Left colon (tissue), 2 donors: ENCODE measurements at regions of chr4 and their contacts with region 1.

Region 1: DNA sequence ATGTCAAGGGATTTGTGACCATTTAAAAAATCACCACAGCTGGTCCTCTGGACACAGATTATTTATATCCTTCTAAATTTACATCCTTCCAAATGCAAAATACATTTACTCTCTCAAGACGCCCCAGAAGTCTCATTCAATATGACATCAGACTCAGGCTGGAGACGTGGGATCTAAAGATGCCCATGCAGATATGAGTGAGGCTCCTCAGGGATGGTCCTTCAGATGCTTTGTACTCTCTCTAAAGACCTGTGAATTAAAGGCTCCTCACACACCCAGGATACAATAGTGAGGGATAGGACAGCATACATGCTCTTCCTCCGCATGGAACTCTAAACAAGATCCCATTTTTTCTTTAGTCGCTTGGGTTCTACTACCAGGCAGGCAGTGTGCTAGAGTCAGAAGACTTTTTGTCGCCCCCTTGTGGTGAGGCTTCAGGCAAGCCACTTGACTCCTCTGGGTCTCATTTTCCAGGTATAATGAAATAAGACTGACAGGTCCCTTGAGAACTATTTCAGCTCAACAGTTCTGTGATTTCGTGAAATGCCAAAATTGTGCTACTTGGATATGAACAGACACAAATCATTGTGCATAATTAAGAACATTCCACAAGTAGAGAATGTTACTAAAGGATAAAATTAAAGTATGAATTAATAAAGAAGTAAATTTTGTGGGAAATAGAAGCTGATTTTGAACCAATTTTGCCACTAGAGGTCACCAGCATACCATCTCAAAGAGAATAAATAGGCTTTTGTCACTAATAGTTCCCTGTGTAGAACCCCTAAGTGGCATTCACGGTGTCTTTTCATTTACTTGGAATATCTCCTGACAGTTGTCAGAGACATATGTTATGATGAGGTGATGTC is 13.7 kb upstream of the SCOC start:
- DNase-seq: peak; percentile 65 to 88
- ATAC-seq: peak; percentile 67

Region 2: DNA sequence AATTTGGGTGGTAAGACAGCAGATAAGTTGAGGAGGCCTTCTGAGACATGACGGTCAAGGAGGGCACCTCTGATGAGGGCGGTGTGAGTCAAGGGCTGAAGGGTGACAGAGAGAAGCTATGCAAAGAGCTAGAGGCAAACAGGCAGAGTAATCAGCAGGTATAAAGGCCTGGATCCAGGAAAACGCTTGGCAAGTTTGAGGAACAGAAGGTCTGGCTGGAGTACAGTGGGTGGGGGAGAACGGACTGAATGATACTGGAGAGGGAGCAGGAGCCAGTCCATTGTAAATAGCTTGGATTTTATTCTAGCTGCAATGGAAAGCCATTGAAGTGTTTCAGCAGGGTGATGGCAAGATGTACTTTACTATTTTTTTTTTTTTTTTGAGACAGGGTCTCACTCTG is 866.6 kb before region 1 on chr4:
- intact Hi-C with region 1: no loop called
- DNase-seq: no peak
- ATAC-seq: no peak

Region 3: DNA sequence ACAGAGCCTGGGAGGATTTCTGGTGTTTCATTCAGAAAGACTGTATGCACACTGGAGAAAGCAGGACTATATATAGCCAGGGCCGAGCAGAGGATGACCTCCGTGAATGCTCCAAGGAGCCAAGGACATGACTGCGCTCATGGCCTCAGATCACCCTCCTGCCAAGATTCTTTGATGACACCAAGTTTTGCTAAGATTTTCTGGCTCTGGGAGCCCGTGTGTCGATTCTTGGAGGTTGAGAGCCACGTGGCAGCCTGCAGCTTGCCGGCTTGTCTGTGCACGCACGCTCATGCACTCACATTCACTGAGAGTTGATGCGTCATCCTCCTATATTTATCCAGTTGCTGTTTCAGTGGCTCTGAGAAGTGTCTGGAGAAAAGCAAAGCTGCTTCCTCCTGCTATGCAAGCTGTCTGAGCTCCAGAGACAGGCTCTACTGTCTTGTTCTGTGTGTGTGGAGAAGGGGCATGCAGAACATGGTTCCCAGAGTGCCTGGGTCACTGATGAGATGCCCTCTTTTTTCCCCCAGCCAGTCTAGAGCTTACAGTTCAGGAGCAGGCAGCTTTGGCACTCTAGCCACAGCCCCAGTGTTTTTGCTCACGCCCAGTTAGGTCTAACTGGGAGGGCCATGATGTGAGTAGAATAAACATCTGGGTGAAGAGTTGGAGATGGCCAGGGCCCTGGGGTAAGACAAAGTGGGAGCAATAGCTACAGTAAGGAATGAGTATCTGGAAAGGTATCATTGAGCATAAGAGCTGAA is 51.2 kb before region 1 on chr4:
- intact Hi-C with region 1: no loop called
- DNase-seq: peak; percentile 23 to 52
- ATAC-seq: no peak

Region 4: GRCh38 chr4:140609548-140610425 is 250.0 kb after region 1 on chr4:
- intact Hi-C with region 1: loop called in 1 of 2 experiments (anchors 5 kb)
- DNase-seq: no peak
- ATAC-seq: peak; percentile 34

Region 5: DNA sequence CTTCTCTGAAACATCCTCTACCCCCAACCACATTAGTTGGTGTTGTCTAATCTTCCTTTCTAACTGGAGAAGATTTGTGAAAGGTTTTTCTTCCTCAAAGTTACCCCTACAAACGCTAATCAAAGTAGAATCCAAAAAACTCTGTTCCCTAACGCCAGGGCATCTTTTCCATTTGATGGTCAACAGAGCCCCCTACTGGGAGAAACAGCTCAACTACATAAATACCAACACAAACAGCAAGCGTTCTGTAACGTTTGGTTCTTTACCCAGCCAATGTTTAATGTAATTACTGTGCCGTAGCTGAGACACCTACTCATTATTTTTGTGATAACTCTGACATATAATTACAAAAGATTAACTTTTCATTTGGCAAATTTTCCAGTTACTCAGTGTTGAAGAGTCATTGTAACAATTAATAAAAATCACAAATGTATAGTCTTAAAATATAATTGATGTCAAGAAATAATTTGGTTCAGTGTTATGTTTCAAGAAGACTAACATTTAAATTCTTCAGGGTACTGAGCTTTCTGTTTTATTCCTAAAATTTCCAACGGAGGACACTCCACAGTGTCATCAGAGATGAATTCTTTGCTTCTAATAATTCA is 491.3 kb after region 1 on chr4:
- intact Hi-C with region 1: loop called in 1 of 2 experiments (anchors 5 kb)
- DNase-seq: peak in 1 of 2 donors; percentile 25
- ATAC-seq: peak; percentile 72